Tibial artery (tissue), 4 donors: ENCODE measurements at regions of chr3 and their contacts with region 1.

Region 1: DNA sequence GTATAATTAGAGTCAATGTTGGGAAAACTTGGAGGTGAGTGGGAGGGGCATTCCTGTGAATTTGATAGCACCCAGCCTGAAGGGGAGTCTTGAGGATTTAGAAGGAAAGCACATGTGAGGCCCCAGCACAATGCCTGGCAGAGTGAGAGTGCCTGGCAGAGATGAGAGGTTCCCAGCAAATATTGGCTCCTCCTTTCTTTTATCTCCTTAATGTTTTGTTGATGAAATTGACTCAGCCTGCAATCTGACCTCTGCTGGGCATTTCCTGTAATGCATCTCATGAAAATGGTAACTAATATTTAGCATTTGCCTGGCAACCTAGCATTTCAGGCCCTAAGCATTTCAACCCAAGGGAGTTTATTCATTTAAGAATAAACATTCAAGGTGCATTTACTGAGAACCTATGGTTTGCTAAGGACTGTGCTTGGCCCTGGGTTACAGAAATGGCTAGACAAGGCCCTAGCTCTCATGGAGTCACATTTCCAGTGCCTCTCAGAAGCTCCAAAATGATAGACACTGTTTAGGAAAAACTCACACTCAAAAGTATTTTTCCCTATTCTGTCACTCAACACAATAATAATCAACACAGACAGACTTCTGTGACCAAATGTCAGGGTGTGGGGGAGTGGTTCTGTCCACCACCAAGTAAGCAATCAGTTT is 19.0 kb downstream of the PDHB start:
- DNase-seq: peak in 1 of 2 donors; percentile 49
- H3K4me3 ChIP-seq: no peak overlapping the region
- H3K27ac ChIP-seq: no peak overlapping the region
- H3K4me1 ChIP-seq: peaks cover 0 to 4% (median 2%) of the 10 kb centered on the region in 4 donors
- H3K27me3 ChIP-seq: no peaks in the 10 kb centered on the region
- CTCF ChIP-seq: peak; percentile 77

Region 2: GRCh38 chr3:58324391-58325390 is 90.0 kb before region 1 on chr3:
- intact Hi-C with region 1: loop called (anchors 5 kb)
- DNase-seq: no peak
- H3K4me3 ChIP-seq: no peak overlapping the region
- H3K27ac ChIP-seq: no peak overlapping the region
- H3K4me1 ChIP-seq: peaks cover 0 to 7% (median 0%) of the 10 kb centered on the region in 4 donors
- H3K27me3 ChIP-seq: no peaks in the 10 kb centered on the region
- CTCF ChIP-seq: no peak